Thyroid gland (tissue), 4 donors: ENCODE measurements at regions of chr9 and their contacts with region 1.

Region 1: DNA sequence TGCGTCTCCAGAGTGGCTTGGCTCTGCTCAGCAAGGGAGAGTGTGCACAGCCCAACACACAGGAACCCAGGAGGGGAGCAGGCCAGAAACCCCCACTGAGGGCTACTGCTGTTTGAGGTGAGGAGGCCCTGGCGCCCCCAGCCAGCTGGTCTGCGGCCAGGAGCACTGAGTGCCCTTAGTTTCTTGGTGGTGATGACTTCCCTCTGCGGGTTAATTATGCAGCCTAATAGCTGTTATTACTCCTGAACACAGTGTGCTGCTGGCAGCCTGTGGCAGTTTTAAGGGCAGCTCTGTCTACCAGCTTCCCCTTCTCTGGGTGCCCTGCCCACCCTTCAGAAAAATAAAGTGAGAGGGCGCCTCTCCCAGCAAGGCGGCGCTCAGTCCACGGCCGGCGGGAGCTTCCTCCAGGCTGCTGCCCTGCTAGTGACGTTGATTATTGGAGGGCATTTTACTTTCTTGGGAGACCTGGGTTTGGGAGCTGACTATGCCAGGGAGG is 19.2 kb downstream of the GADD45G start:
- DNase-seq: no peak
- H3K4me3 ChIP-seq: no peak overlapping the region
- H3K27ac ChIP-seq: no peak overlapping the region
- H3K4me1 ChIP-seq: peaks cover 46 to 54% of the 10 kb centered on the region in 2 donors
- H3K27me3 ChIP-seq: no peaks in the 10 kb centered on the region
- CTCF ChIP-seq: no peak
- POLR2A ChIP-seq: no peak

Region 2: DNA sequence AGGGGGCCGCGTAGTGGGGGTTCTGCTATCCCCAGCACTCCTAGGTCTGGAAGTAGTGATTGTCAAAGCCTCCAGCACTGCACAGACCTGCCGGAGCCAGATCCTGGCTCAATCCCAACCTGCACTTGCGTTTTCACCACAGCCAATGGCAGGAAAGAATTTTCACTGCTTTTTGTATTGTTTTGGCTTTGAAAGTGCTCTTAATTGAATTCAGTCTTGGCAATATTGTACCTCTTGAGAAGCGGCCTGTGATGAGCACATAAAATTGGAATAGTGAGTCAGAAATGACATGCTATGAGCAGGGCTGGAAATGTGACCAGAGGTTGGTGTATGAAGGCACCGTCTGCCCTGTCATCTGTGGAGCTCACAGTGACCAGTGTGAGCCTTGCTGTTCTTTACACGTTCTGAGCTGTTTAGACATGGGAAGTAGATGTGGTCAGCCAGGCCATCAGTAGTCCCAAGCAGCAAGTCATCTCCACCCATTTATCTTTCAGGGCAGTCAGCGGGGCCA is 264.2 kb before region 1 on chr9:
- intact Hi-C with region 1: no loop called
- DNase-seq: peak; percentile 87
- H3K4me3 ChIP-seq: no peak overlapping the region
- H3K27ac ChIP-seq: peak overlapping the region; percentile 86 to 90 (median 89)
- H3K4me1 ChIP-seq: peaks cover 32 to 37% of the 10 kb centered on the region in 2 donors
- H3K27me3 ChIP-seq: no peaks in the 10 kb centered on the region
- CTCF ChIP-seq: no peak
- POLR2A ChIP-seq: no peak

Region 3: GRCh38 chr9:89428901-89429890 is 194.8 kb before region 1 on chr9:
- intact Hi-C with region 1: no loop called
- DNase-seq: no peak
- H3K4me3 ChIP-seq: no peak overlapping the region
- H3K27ac ChIP-seq: no peak overlapping the region
- H3K4me1 ChIP-seq: peaks cover 14 to 35% of the 10 kb centered on the region in 2 donors
- H3K27me3 ChIP-seq: no peaks in the 10 kb centered on the region
- CTCF ChIP-seq: no peak
- POLR2A ChIP-seq: no peak

Region 4: GRCh38 chr9:89448381-89448780 is 175.6 kb before region 1 on chr9:
- intact Hi-C with region 1: no loop called
- DNase-seq: no peak
- H3K4me3 ChIP-seq: no peak overlapping the region
- H3K27ac ChIP-seq: peak overlapping the region in 1 of 3 donors; percentile 25
- H3K4me1 ChIP-seq: peaks cover 6 to 31% of the 10 kb centered on the region in 2 donors
- H3K27me3 ChIP-seq: no peaks in the 10 kb centered on the region
- CTCF ChIP-seq: no peak
- POLR2A ChIP-seq: no peak

Region 5: DNA sequence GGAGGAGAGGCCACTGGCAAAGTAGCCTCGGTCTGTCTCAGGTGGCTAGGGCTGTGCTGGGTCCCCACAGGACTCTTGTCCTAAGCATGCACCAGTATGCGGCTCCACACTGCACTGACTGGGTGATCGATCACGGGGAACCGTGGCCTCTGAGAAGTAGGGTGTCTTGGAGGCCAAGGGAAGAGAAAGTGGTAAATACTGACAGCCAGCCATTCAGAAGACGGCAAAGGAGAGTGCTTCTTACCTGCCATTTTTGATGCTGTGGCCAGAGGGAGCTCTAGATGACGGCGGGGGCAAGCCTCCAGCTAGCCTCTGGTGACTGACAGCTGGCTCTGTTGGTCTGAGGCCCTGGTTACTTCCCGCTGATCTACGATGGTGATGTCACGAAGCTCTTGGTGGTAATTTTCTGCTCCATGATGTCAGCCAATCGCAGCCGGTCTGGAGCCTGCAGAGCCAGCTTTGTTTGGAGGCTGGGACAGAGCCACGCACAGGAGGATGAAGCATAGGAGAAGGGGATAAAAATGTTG is 59.6 kb before region 1 on chr9:
- intact Hi-C with region 1: no loop called
- DNase-seq: no peak
- H3K4me3 ChIP-seq: no peak overlapping the region
- H3K27ac ChIP-seq: no peak overlapping the region
- H3K4me1 ChIP-seq: no peaks in the 10 kb centered on the region
- H3K27me3 ChIP-seq: no peaks in the 10 kb centered on the region
- CTCF ChIP-seq: no peak
- POLR2A ChIP-seq: no peak

Region 6: GRCh38 chr9:89657765-89658164 is 33.8 kb after region 1 on chr9:
- intact Hi-C with region 1: loop called (anchors 5 kb)
- DNase-seq: no peak
- H3K4me3 ChIP-seq: no peak overlapping the region
- H3K27ac ChIP-seq: peak overlapping the region in 2 of 3 donors; percentile 28 to 34
- H3K4me1 ChIP-seq: peaks cover 39 to 68% of the 10 kb centered on the region in 2 donors
- H3K27me3 ChIP-seq: no peaks in the 10 kb centered on the region
- CTCF ChIP-seq: no peak
- POLR2A ChIP-seq: no peak